RWPE1 (cell line): ENCODE measurements at regions of chr3 and their contacts with region 1.

Region 1: GRCh38 chr3:186617038-186617946 is 4.4 kb downstream of the AHSG start:
- DNase-seq: peak; percentile 95
- H3K27ac ChIP-seq: peak overlapping the region; percentile 89
- CTCF ChIP-seq: peak; percentile 93

Region 2: GRCh38 chr3:185552358-185552877 is 1064.9 kb before region 1 on chr3 and contains the start of gene LIPH:
- CTCF ChIA-PET with region 1: no interaction called
- POLR2A ChIA-PET with region 1: no interaction called
- DNase-seq: no peak
- H3K27ac ChIP-seq: no peak within 1 kb of the TSS
- CTCF ChIP-seq: no peak

Region 3: GRCh38 chr3:186287711-186288110 is 329.6 kb before region 1 on chr3:
- CTCF ChIA-PET with region 1: no interaction called
- POLR2A ChIA-PET with region 1: no interaction called
- DNase-seq: no peak
- H3K27ac ChIP-seq: no peak overlapping the region
- CTCF ChIP-seq: no peak

Region 4: DNA sequence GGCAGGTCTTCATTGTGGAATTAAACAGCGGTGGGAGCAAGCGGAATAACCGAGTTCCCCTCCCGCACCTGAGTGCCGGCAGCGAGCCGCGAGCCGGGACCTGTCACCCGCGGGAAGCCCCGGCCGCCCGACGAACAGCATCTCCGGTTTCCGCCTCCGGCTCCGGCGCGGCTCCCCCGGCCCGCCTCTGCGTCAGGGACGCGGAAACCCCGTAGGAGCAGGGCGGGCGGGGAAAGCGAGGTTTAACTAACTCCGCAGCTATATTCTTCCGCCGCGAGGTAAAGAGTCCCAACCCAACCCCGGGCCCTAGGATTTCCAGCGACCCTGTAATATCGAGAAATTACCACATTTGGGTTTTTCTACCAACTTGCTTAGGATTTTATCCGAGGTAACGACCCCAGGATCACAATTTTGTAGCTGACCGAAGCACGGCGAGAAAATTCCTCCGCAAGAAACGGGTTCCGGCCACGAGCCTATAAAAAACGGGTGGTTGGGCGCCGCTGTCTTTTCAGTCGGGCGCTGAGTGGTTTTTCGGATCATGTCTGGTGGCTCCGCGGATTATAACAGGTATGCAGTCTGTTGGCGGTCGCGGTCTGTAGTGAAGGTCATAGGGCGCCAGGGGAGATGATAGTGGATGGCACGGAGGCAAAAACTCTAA is 165.9 kb after region 1 on chr3 and contains the start of gene EIF4A2:
- CTCF ChIA-PET with region 1: interaction called, 12 read pairs
- POLR2A ChIA-PET with region 1: interaction called, 9 read pairs
- DNase-seq: peak; percentile 93
- H3K27ac ChIP-seq: peak within 1 kb of the TSS; percentile 96
- CTCF ChIP-seq: no peak

Region 5: GRCh38 chr3:186821429-186822367 is 204.4 kb after region 1 on chr3:
- CTCF ChIA-PET with region 1: interaction called, 17 read pairs
- POLR2A ChIA-PET with region 1: no interaction called
- DNase-seq: no peak
- H3K27ac ChIP-seq: no peak overlapping the region
- CTCF ChIP-seq: peak; percentile 75